Endothelial cell of umbilical vein (primary cell): ENCODE measurements at regions of chr1 and their contacts with region 1.

Region 1: DNA sequence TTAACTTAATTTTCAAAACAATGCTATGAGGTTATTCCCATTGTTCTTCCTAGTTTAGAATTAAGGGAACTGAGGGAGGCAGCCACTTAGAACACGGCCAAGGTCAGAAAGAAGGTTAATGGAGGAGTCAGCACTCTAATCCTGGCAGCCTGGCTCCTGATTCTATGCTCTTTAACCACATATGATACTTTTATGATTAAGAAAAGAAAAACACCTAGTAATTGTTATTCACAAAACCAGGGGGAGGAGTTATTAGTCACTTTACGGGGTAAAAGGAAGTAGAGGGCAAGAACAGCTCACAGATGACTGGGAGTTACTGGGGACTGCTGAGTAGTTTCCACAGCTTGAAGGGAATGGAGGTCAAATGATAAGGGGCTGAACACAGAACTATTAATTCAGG is 38.6 kb downstream of the GADD45A start:
- DNase-seq: peak; percentile 97
- H3K4me3 ChIP-seq: peak overlapping the region in 1 of 3 experiments; percentile 17
- H3K27ac ChIP-seq: peak overlapping the region; percentile 95
- H3K4me1 ChIP-seq: peaks cover 68% of the 10 kb centered on the region
- H3K27me3 ChIP-seq: no peaks in the 10 kb centered on the region
- CTCF ChIP-seq: no peak
- POLR2A ChIP-seq: peak; percentile 40

Region 2: DNA sequence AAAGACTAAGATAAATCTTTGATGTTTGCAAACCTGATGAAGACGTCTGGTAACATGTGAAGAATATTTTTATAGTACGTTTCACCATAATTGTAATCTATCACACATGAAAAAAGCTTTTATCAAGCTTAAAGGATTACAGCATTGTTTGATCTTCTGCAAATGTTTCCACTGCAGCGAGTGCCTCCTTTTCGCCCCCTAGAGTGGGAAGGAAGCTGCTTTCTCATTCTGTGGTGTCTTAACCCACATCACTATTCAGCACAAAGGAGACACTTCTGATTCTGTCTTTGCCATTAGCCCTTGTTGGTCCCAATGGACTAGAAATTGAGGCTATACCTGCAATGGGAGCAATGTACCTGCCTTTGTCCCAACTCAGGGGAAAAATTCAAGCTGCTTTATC is 461.9 kb before region 1 on chr1:
- CTCF ChIA-PET with region 1: no interaction called
- POLR2A ChIA-PET with region 1: no interaction called
- dilution Hi-C with region 1: no loop called
- intact Hi-C with region 1: loop called (anchors 10 kb)
- DNase-seq: no peak
- H3K4me3 ChIP-seq: no peak overlapping the region
- H3K27ac ChIP-seq: no peak overlapping the region
- H3K4me1 ChIP-seq: peaks cover 33% of the 10 kb centered on the region
- H3K27me3 ChIP-seq: no peaks in the 10 kb centered on the region
- CTCF ChIP-seq: peak in 1 of 2 donors; percentile 12
- POLR2A ChIP-seq: no peak

Region 3: GRCh38 chr1:67713057-67713846 is 10.4 kb before region 1 on chr1:
- CTCF ChIA-PET with region 1: interaction called, 10 read pairs
- POLR2A ChIA-PET with region 1: interaction called, 7 read pairs
- dilution Hi-C with region 1: no loop called
- intact Hi-C with region 1: loop called (anchors 1 kb)
- DNase-seq: peak; percentile 92
- H3K4me3 ChIP-seq: no peak overlapping the region
- H3K27ac ChIP-seq: peak overlapping the region; percentile 64
- H3K4me1 ChIP-seq: peaks cover 45% of the 10 kb centered on the region
- H3K27me3 ChIP-seq: no peaks in the 10 kb centered on the region
- CTCF ChIP-seq: no peak
- POLR2A ChIP-seq: no peak